B cell (primary cell): ENCODE measurements at regions of chr10 and their contacts with region 1.

Region 1: DNA sequence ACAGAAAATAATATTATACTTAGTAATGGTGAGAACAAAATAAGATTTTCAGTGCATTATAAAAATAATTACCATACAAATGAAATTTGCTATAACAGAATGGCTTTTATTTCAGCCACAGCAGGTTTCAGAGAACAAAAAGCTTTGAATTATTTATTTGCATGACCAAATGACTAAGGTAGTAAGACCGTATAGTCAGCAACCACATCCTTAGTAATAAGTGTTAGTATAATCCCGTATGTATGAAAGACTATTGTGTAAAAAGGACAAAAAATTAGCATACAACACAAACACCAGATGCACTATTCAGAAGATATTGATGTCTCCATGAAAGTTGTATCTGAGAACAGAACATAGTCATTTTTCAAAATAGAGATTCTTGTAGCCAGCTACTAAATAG is 12.2 kb downstream of the PDZD8 start:
- DNase-seq: no peak
- ATAC-seq: no peak
- H3K4me3 ChIP-seq: no peak overlapping the region
- H3K4me3 Mint-ChIP-seq: no peak overlapping the region
- H3K27ac ChIP-seq: no peak overlapping the region
- H3K27ac Mint-ChIP-seq: no peak overlapping the region
- H3K4me1 ChIP-seq: peaks cover 0 to 12% of the 10 kb centered on the region in 2 donors
- H3K4me1 Mint-ChIP-seq: peaks cover 33% of the 10 kb centered on the region
- H3K27me3 ChIP-seq: no peaks in the 10 kb centered on the region
- H3K27me3 Mint-ChIP-seq: no peaks in the 10 kb centered on the region
- CTCF ChIP-seq: no peak

Region 2: DNA sequence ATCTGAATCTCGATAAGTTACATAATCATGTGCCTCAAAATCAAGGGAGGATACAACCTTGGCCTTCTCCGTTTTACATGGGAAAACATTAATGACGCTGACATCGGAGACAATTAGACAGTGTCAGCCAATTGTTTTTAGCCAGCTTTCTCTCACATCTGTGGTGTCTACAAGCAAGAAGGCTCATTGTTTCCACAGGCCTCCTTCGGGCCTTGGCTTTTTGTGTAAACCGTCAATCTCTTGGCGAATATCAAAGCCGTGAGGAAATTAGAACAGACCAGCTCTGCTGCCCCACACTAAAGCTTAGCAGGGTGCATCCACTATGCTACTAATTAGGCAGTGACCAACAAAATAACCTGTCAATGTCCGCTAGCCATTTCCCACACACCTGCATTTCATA is 268.2 kb before region 1 on chr10:
- CTCF ChIA-PET with region 1: no interaction called
- POLR2A ChIA-PET with region 1: no interaction called
- intact Hi-C with region 1: no loop called
- DNase-seq: no peak
- ATAC-seq: no peak
- H3K4me3 ChIP-seq: no peak overlapping the region
- H3K4me3 Mint-ChIP-seq: no peak overlapping the region
- H3K27ac ChIP-seq: no peak overlapping the region
- H3K27ac Mint-ChIP-seq: no peak overlapping the region
- H3K4me1 ChIP-seq: no peaks in the 10 kb centered on the region
- H3K4me1 Mint-ChIP-seq: no peaks in the 10 kb centered on the region
- H3K27me3 ChIP-seq: no peaks in the 10 kb centered on the region
- H3K27me3 Mint-ChIP-seq: peaks cover 6% of the 10 kb centered on the region
- CTCF ChIP-seq: no peak

Region 3: DNA sequence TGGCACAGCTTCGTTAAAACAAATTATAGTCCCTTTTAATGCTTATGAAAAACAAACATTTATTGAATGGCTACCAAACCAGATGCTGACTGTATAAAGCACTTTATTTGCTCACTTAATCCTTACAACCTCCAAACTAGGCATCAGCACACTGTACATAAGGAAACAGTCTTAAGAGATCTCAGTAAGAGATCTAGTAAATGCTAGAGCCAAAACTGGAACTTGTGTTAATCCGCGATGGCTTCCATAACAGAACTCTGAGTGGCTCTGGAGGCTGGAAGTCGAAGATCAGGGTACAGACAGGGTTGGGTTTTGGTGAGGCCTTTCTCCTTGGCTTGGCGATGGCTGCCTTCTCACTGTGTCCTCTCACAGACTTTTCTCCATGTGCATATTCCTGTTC is 14.8 kb before region 1 on chr10:
- CTCF ChIA-PET with region 1: no interaction called
- POLR2A ChIA-PET with region 1: no interaction called
- intact Hi-C with region 1: loop called (anchors 2 kb)
- DNase-seq: no peak
- ATAC-seq: no peak
- H3K4me3 ChIP-seq: no peak overlapping the region
- H3K4me3 Mint-ChIP-seq: no peak overlapping the region
- H3K27ac ChIP-seq: no peak overlapping the region
- H3K27ac Mint-ChIP-seq: no peak overlapping the region
- H3K4me1 ChIP-seq: no peaks in the 10 kb centered on the region
- H3K4me1 Mint-ChIP-seq: peaks cover 45% of the 10 kb centered on the region
- H3K27me3 ChIP-seq: no peaks in the 10 kb centered on the region
- H3K27me3 Mint-ChIP-seq: no peaks in the 10 kb centered on the region
- CTCF ChIP-seq: no peak

Region 4: GRCh38 chr10:117782276-117782675 is 419.2 kb after region 1 on chr10:
- CTCF ChIA-PET with region 1: no interaction called
- POLR2A ChIA-PET with region 1: no interaction called
- intact Hi-C with region 1: no loop called
- DNase-seq: no peak
- ATAC-seq: no peak
- H3K4me3 ChIP-seq: no peak overlapping the region
- H3K4me3 Mint-ChIP-seq: no peak overlapping the region
- H3K27ac ChIP-seq: no peak overlapping the region
- H3K27ac Mint-ChIP-seq: no peak overlapping the region
- H3K4me1 ChIP-seq: no peaks in the 10 kb centered on the region
- H3K4me1 Mint-ChIP-seq: no peaks in the 10 kb centered on the region
- H3K27me3 ChIP-seq: no peaks in the 10 kb centered on the region
- H3K27me3 Mint-ChIP-seq: no peaks in the 10 kb centered on the region
- CTCF ChIP-seq: no peak